MCF 10A (cell line): ENCODE measurements at regions of chr5 and their contacts with region 1.

Region 1: GRCh38 chr5:167743685-167744464 is 547.6 kb upstream of the WWC1 start:
- DNase-seq: peak; percentile 90
- H3K4me3 Mint-ChIP-seq: no peak overlapping the region
- H3K27ac Mint-ChIP-seq: peak overlapping the region; percentile 5
- H3K4me1 Mint-ChIP-seq: peaks cover 18% of the 10 kb centered on the region
- H3K27me3 Mint-ChIP-seq: no peaks in the 10 kb centered on the region
- CTCF ChIP-seq: no peak

Region 2: DNA sequence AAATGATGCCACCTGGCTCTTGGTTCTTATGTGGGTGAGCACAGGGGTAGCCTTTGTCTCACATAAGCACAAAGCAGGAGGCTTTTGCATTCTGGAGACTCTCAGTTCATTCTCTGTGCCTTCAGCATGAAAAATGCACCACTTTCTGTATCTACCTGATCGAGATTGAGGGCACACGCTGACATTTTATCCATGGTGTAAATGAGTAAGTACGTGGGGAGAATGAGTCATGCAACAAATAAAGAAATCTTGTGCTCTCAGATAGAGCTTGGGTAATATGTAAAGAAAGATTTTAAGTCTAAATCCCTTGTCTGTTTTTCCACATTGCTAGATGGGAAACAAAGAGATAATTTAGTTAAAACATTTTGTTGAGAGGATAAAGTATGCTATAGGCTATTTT is 59.6 kb before region 1 on chr5:
- CTCF ChIA-PET with region 1: no interaction called
- POLR2A ChIA-PET with region 1: no interaction called
- intact Hi-C with region 1: no loop called
- DNase-seq: peak; percentile 66
- H3K4me3 Mint-ChIP-seq: no peak overlapping the region
- H3K27ac Mint-ChIP-seq: no peak overlapping the region
- H3K4me1 Mint-ChIP-seq: peaks cover 23% of the 10 kb centered on the region
- H3K27me3 Mint-ChIP-seq: no peaks in the 10 kb centered on the region
- CTCF ChIP-seq: no peak

Region 3: GRCh38 chr5:167759057-167759821 is 15.4 kb after region 1 on chr5:
- CTCF ChIA-PET with region 1: interaction called, 8 read pairs
- POLR2A ChIA-PET with region 1: interaction called, 10 read pairs
- intact Hi-C with region 1: no loop called
- DNase-seq: peak; percentile 99
- H3K4me3 Mint-ChIP-seq: no peak overlapping the region
- H3K27ac Mint-ChIP-seq: peak overlapping the region; percentile 26
- H3K4me1 Mint-ChIP-seq: peaks cover 20% of the 10 kb centered on the region
- H3K27me3 Mint-ChIP-seq: no peaks in the 10 kb centered on the region
- CTCF ChIP-seq: no peak

Region 4: GRCh38 chr5:167780177-167780576 is 36.3 kb after region 1 on chr5:
- CTCF ChIA-PET with region 1: no interaction called
- POLR2A ChIA-PET with region 1: no interaction called
- intact Hi-C with region 1: no loop called
- DNase-seq: no peak
- H3K4me3 Mint-ChIP-seq: no peak overlapping the region
- H3K27ac Mint-ChIP-seq: no peak overlapping the region
- H3K4me1 Mint-ChIP-seq: no peaks in the 10 kb centered on the region
- H3K27me3 Mint-ChIP-seq: no peaks in the 10 kb centered on the region
- CTCF ChIP-seq: no peak

Region 5: DNA sequence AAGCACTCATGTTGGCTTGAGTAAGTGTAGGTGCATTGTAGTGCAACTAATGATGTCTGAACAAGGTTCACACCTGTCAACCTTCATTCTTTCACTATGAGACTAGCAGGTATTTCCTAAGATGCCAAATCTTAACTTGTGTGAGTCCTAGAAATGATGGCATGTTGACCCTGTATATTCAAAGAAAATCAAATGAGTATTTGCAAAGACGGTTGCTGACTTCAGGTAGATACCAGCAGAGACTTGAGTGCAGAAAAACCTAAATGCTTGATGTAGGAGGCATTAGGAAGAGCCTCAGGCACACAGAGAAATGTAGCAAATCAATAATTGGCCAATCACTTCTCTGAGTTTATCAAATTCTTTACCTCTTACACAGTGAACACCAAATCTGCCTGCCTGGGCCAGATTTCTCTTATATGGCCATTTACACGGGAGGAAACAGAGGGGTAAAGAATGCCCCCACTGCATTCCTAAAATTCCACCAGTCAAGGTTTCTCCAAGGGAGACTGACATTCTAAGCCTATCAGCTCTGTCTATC is 59.0 kb after region 1 on chr5:
- CTCF ChIA-PET with region 1: no interaction called
- POLR2A ChIA-PET with region 1: no interaction called
- intact Hi-C with region 1: no loop called
- DNase-seq: no peak
- H3K4me3 Mint-ChIP-seq: no peak overlapping the region
- H3K27ac Mint-ChIP-seq: no peak overlapping the region
- H3K4me1 Mint-ChIP-seq: peaks cover 12% of the 10 kb centered on the region
- H3K27me3 Mint-ChIP-seq: no peaks in the 10 kb centered on the region
- CTCF ChIP-seq: no peak

Region 6: DNA sequence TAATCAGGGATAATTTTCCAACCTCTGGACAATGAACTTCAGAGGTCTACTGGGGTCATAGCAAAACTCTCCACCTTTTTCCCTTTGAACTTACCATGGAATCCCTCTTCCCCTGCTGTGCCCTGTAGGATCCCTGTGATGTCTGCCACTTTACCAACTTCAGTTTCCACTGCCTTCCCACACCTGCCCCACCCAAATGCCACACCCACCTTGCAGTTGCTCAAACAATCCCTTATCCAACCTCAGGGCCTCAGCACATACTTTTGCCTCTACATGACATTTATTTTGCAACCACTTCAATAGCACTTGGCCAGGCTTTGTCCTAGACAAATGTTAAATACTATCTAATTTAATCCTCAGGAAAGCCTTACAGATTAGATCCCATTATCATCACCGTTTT is 83.9 kb after region 1 on chr5:
- CTCF ChIA-PET with region 1: no interaction called
- POLR2A ChIA-PET with region 1: no interaction called
- intact Hi-C with region 1: no loop called
- DNase-seq: peak; percentile 79
- H3K4me3 Mint-ChIP-seq: no peak overlapping the region
- H3K27ac Mint-ChIP-seq: no peak overlapping the region
- H3K4me1 Mint-ChIP-seq: peaks cover 10% of the 10 kb centered on the region
- H3K27me3 Mint-ChIP-seq: no peaks in the 10 kb centered on the region
- CTCF ChIP-seq: no peak